ENCODE measurements at regions of chr1 and their contacts with region 1.

Region 1: DNA sequence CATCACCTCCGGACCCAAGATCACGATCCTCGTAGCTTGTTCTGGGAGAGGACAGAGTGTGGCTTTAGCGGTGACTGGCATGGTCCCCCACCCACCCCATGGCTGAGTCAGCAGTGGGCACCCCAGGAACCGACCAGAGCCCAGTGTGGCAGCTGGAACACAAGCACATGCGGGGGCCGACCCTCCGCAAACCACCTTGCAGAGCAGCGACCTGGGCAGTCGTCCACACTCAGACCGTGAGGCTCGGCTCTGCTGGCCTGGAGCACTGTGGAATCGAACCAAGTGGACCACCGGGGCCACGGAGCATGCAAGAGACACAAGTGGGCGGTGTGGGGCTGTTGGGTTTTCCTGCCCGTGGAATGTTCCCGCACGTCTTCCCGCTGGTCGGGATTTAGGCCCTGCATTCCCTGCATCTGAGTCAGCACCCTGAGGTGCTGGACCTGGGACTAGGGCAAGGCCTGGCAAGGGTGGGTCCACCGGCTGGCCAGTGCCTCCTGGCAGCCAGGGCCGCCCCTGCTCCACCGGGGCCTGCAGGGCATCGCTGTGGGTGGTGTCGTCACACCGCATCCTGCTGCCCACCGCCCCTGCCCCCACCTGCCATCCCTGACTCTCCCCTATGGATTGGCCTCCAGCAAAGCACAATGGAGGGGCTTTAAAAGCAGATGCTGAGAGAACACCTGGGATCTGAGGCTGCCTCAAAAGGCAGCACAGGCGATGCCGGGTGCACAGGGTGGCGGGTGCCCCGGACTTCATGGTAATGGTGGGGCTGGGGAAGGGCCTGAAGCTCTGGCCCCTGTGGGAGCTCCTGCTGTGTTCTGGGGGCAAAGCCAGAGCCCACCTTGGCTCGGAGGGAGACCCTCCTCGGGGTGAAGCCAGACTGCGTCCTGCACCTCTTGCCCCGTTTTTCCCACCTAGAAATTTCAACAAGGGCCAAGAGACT is 18.5 kb downstream of the MORN1 start:
- DNase-seq: no peak
- ATAC-seq: no peak
- H3K4me3 ChIP-seq: no peak overlapping the region
- H3K27ac ChIP-seq: no peak overlapping the region; the same call in 2 of the 3 replicates
- H3K4me1 ChIP-seq: peaks cover 0 to 44% of the 10 kb centered on the region in 2 experiments; a peak in 2 of 5 replicates
- H3K27me3 ChIP-seq: peaks cover 58 to 86% of the 10 kb centered on the region in 2 experiments
- CTCF ChIP-seq: no peak
- EP300 ChIP-seq: no peak
- POLR2A ChIP-seq: no peak
- RAD21 ChIP-seq: no peak

Region 2: GRCh38 chr1:2314803-2315673 is 57.8 kb before region 1 on chr1:
- CTCF ChIA-PET with region 1: no interaction called
- POLR2A ChIA-PET with region 1: interaction called, 3 read pairs
- in situ Hi-C with region 1: no loop called
- intact Hi-C with region 1: loop called (anchors 10 kb)
- DNase-seq: peak; percentile 62 to 97 (median 96)
- ATAC-seq: peak; percentile 61
- H3K4me3 ChIP-seq: peak overlapping the region; percentile 27
- H3K27ac ChIP-seq: peak overlapping the region; percentile 50; the same call in 1 of the 3 replicates
- H3K4me1 ChIP-seq: peaks cover 10 to 88% of the 10 kb centered on the region in 2 experiments; a peak in 4 of 5 replicates
- H3K27me3 ChIP-seq: peaks cover 19 to 27% of the 10 kb centered on the region in 2 experiments; a peak in 4 of 5 replicates
- CTCF ChIP-seq: peak; percentile 51 to 63 (median 57); a peak in 5 of 6 replicates
- EP300 ChIP-seq: no peak
- POLR2A ChIP-seq: no peak
- RAD21 ChIP-seq: no peak